ENCODE measurements at regions of chr15 and their contacts with region 1.

Region 1: DNA sequence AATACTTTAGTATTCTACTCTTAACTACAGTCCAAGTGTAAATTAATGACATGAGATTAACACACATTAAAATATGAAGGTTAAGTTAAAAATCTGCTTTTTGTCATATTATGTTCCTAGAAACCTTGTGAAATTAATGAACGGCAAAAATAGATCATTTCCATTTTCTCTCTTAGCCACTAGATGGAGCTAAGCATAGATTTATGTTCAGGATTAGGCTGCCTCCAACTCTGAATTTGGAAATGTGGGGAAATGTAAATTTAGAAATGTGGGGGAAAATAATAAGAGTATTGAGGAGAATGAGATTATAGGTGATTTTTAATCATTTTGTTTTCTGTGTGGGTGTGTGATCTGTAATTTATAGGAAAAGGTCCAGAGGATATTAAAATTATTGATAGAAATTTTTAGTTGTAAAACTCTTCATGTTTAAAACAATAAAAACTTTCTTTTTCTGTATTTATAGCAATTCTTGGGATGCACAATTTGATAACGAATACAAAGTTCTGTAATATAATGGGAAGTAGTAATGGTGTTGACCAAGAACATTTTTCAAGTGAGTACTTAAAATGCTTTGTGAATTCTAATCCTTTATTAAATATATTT is 59.2 kb downstream of the TMOD3 start:
- DNase-seq: no peak
- H3K4me3 ChIP-seq: no peak overlapping the region
- H3K27ac ChIP-seq: no peak overlapping the region
- H3K27me3 ChIP-seq: no peaks in the 10 kb centered on the region
- CTCF ChIP-seq: peak; percentile 76

Region 2: GRCh38 chr15:51870774-51871173 is 17.9 kb before region 1 on chr15:
- CTCF ChIA-PET with region 1: interaction called, 10 read pairs
- POLR2A ChIA-PET with region 1: no interaction called
- DNase-seq: no peak
- H3K4me3 ChIP-seq: no peak overlapping the region
- H3K27ac ChIP-seq: no peak overlapping the region
- H3K27me3 ChIP-seq: no peaks in the 10 kb centered on the region
- CTCF ChIP-seq: no peak

Region 3: GRCh38 chr15:52018693-52019387 is 130.1 kb after region 1 on chr15 and contains the start of gene MAPK6:
- CTCF ChIA-PET with region 1: no interaction called
- POLR2A ChIA-PET with region 1: no interaction called
- DNase-seq: peak; percentile 88
- H3K4me3 ChIP-seq: peak within 1 kb of the TSS; percentile 91
- H3K27ac ChIP-seq: peak within 1 kb of the TSS; percentile 99
- H3K27me3 ChIP-seq: no peaks in the 10 kb centered on the region
- CTCF ChIP-seq: no peak
- polyA plus RNA-seq, gene MAPK6: 55.7 and 74.3 TPM in 2 replicates